Left ventricle myocardium inferior (tissue), 1 donor: ENCODE measurements at regions of chr20 and their contacts with region 1.

Region 1: DNA sequence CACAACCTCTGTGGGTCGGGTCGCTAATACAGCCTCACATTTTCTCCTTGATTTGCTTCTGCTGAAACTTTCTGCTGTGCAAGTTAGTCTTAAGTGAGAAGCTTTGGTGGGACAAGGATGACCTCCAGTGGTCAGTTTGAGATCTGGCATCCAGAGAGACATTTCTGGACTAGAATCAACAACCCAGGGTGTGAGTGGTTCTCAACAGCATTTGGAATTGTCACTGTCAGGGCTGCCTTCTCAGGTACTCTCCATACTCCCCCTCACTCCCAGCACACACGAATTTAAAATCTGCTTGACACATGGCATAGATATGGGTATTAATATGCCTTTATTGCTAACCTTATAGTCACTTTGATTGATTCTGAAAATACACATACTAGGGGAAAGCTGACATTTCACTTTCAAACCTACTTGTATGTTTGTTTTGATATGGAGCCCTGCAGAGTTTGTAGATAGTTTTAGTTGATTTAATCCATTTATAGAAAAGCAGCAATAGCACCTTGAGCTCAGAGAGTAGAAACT is 13.2 kb downstream of the OTOR start:
- DNase-seq: no peak
- H3K4me3 ChIP-seq: no peak overlapping the region
- H3K27ac ChIP-seq: no peak overlapping the region
- H3K4me1 ChIP-seq: peaks cover 10% of the 10 kb centered on the region
- H3K27me3 ChIP-seq: peaks cover 26% of the 10 kb centered on the region
- CTCF ChIP-seq: peak; percentile 79

Region 2: DNA sequence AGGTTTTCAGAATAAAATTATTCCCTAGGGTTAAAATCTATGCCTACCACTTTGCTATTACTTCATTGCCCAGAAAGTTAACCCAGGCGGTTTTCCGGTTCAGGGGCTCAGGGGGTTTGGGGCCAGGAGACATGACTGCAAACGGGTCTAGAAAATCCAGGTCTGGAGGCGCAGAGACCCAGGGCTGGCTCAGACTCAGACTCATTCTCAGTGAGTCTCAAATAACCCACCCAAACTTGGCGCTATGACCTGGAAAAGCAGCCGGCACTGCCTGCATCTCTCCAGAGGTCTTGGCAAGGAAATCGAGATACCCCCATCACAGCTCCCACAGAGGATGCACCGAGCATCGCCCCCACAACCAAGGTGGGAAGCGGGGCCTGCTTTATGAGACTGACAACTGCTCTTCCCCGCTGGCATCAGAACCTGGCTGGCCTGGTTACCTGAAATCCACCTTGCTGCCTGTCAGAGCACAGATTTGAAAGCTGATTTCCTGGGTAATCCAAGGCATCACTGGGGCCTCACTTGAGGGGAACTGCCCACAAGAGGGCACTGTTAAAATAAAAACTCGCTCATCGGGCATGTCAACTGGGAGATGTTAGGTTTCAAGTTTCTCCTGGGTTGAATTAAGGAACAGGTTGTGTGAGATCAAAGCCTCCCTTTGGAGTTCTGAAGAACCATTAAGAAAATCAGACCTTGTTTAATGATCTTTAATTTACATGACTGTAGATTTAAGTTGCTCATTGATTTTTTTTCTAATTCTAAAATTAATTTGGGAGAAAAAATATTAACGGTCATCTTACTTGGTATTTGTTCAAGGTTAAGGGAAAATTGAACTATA is 243.2 kb before region 1 on chr20:
- intact Hi-C with region 1: loop called (anchors 10 kb)
- DNase-seq: no peak
- H3K4me3 ChIP-seq: no peak overlapping the region
- H3K27ac ChIP-seq: no peak overlapping the region
- H3K4me1 ChIP-seq: no peaks in the 10 kb centered on the region
- H3K27me3 ChIP-seq: no peaks in the 10 kb centered on the region
- CTCF ChIP-seq: peak; percentile 68

Region 3: DNA sequence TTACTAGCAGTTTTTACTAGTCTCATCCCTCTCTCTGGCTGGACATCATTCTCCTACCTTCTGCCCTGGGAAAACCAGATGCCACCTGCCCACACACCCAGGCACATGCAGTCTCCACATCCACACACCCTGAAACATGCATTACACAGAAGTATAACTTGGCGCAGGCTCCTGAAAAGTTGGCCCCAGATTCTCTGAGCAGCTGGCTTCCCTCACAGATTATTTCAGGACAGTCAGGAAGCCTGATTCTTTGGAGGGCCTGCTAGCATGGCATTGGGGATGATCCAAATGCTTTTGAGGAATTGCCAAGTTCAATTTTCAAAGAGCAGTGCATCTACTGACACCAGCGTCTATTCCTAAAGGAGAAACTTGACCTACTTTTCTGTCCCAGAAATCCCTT is 160.3 kb before region 1 on chr20:
- intact Hi-C with region 1: no loop called
- DNase-seq: no peak
- H3K4me3 ChIP-seq: no peak overlapping the region
- H3K27ac ChIP-seq: no peak overlapping the region
- H3K4me1 ChIP-seq: peaks cover 7% of the 10 kb centered on the region
- H3K27me3 ChIP-seq: no peaks in the 10 kb centered on the region
- CTCF ChIP-seq: no peak

Region 4: GRCh38 chr20:16898433-16898832 is 137.1 kb after region 1 on chr20:
- intact Hi-C with region 1: no loop called
- DNase-seq: no peak
- H3K4me3 ChIP-seq: no peak overlapping the region
- H3K27ac ChIP-seq: no peak overlapping the region
- H3K4me1 ChIP-seq: no peaks in the 10 kb centered on the region
- H3K27me3 ChIP-seq: no peaks in the 10 kb centered on the region
- CTCF ChIP-seq: no peak

Region 5: DNA sequence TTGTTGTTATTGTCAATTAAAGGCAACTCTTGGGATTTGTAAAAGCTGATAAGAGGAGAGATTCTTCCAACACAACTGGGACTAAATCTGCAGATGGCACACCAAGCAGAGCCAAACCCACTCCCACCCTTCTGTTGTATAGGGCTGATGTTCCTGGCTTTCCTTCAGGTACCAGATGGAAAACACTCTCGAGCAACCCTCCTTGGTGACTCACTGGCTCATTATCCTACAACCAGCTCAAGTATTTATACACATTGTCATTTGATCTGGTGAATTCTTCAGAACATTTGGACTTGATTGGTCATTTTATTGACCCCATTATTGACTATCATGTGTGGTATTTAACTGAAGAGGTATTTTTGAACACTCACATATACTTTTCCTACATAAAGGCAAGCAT is 275.2 kb after region 1 on chr20:
- intact Hi-C with region 1: no loop called
- DNase-seq: no peak
- H3K4me3 ChIP-seq: no peak overlapping the region
- H3K27ac ChIP-seq: no peak overlapping the region
- H3K4me1 ChIP-seq: no peaks in the 10 kb centered on the region
- H3K27me3 ChIP-seq: no peaks in the 10 kb centered on the region
- CTCF ChIP-seq: no peak